CD4-positive, alpha-beta memory T cell (primary cell): ENCODE measurements at regions of chr11 and their contacts with region 1.

Region 1: GRCh38 chr11:447923-448731 is 2.0 kb upstream of the PTDSS2 start:
- DNase-seq: peak; percentile 90 to 94 (median 91)
- H3K4me3 ChIP-seq: peak overlapping the region; percentile 73 to 76
- H3K4me3 Mint-ChIP-seq: peak overlapping the region; percentile 88 to 93 (median 90)
- H3K27ac ChIP-seq: peak overlapping the region; percentile 85
- H3K27ac Mint-ChIP-seq: peak overlapping the region; percentile 93 to 98 (median 97)
- H3K4me1 ChIP-seq: peaks cover 32% of the 10 kb centered on the region
- H3K4me1 Mint-ChIP-seq: peaks cover 13 to 32% (median 22%) of the 10 kb centered on the region in 4 donors
- H3K27me3 ChIP-seq: no peaks in the 10 kb centered on the region
- H3K27me3 Mint-ChIP-seq: no peaks in the 10 kb centered on the region

Region 2: GRCh38 chr11:250740-251299 is 197.3 kb before region 1 on chr11:
- CTCF ChIA-PET with region 1: interaction called, 26 read pairs
- POLR2A ChIA-PET with region 1: interaction called, 9 read pairs
- intact Hi-C with region 1: loop called (anchors 2 kb)
- DNase-seq: peak; percentile 75 to 84 (median 81)
- H3K4me3 ChIP-seq: no peak overlapping the region
- H3K4me3 Mint-ChIP-seq: no peak overlapping the region
- H3K27ac ChIP-seq: peak overlapping the region; percentile 8
- H3K27ac Mint-ChIP-seq: peak overlapping the region; percentile 71 to 91 (median 81)
- H3K4me1 ChIP-seq: peaks cover 5% of the 10 kb centered on the region
- H3K4me1 Mint-ChIP-seq: peaks cover 6 to 9% (median 7%) of the 10 kb centered on the region in 4 donors
- H3K27me3 ChIP-seq: no peaks in the 10 kb centered on the region
- H3K27me3 Mint-ChIP-seq: no peaks in the 10 kb centered on the region

Region 3: GRCh38 chr11:304915-305843 is 142.9 kb before region 1 on chr11:
- CTCF ChIA-PET with region 1: interaction called, 42 read pairs
- POLR2A ChIA-PET with region 1: interaction called, 10 read pairs
- intact Hi-C with region 1: loop called (anchors 1 kb)
- DNase-seq: peak; percentile 64 to 75 (median 67)
- H3K4me3 ChIP-seq: no peak overlapping the region
- H3K4me3 Mint-ChIP-seq: peak overlapping the region in 5 of 8 donors; percentile 36 to 76 (median 52)
- H3K27ac ChIP-seq: peak overlapping the region; percentile 6
- H3K27ac Mint-ChIP-seq: peak overlapping the region; percentile 1 to 89 (median 78)
- H3K4me1 ChIP-seq: peaks cover 42% of the 10 kb centered on the region
- H3K4me1 Mint-ChIP-seq: peaks cover 20 to 58% (median 34%) of the 10 kb centered on the region in 4 donors
- H3K27me3 ChIP-seq: no peaks in the 10 kb centered on the region
- H3K27me3 Mint-ChIP-seq: peaks cover 0 to 3% of the 10 kb centered on the region in 2 donors

Region 4: GRCh38 chr11:363948-364761 is 84.0 kb before region 1 on chr11:
- CTCF ChIA-PET with region 1: interaction called, 24 read pairs
- POLR2A ChIA-PET with region 1: interaction called, 4 read pairs
- intact Hi-C with region 1: no loop called
- DNase-seq: peak; percentile 61 to 76 (median 72)
- H3K4me3 ChIP-seq: no peak overlapping the region
- H3K4me3 Mint-ChIP-seq: peak overlapping the region in 2 of 8 donors; percentile 12 to 51
- H3K27ac ChIP-seq: no peak overlapping the region
- H3K27ac Mint-ChIP-seq: peak overlapping the region in 2 of 7 donors; percentile 7 to 63
- H3K4me1 ChIP-seq: peaks cover 17% of the 10 kb centered on the region
- H3K4me1 Mint-ChIP-seq: peaks cover 7 to 22% (median 19%) of the 10 kb centered on the region in 4 donors
- H3K27me3 ChIP-seq: peaks cover 22% of the 10 kb centered on the region
- H3K27me3 Mint-ChIP-seq: peaks cover 18 to 20% of the 10 kb centered on the region in 2 donors

Region 5: DNA sequence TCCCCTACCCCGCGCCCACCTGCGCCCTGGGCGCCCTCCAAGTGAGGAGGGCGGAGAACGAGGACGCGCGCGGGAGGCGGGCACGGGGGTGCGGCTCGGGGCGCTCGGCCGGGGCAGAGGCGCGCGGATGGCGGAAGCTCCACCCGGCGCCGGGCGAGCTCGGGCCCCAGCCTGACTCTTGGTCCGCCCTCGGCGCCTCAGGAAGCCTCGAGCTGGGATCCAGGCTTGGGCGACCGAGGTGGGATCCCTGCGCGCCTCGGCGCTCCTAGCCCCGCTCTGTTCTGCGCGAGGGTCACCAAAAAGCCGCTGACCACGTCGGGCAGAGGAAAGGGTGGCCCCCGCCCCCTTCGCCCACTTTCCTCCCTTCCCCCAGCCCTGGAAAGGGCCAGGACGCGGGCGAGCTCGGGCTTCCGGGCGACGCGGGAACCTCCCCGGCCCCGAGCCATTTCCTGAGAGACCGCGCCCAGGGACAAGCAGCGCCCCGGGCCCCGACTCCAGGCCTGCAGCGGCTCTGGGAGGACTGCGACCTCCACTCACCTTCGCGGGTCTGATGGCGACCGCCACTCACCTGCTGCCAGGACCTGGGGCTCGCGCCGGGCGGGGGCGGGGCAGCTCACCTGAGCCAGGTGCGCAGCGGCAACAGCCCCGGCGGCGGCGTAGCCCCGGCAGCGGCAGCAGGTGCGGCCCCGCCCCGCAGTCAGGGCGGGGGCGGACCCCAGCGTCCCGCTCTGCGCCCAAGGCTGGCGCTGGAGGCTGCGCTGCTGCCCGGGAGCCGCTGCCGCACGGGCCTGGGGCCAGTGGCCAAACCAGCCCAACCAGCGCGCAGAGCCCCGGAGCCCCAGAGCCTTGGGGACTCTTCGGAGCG is 31.1 kb before region 1 on chr11:
- CTCF ChIA-PET with region 1: interaction called, 103 read pairs
- POLR2A ChIA-PET with region 1: interaction called, 539 read pairs
- intact Hi-C with region 1: loop called (anchors 1 kb)
- DNase-seq: peak in 4 of 5 donors; percentile 38 to 54 (median 45)
- H3K4me3 ChIP-seq: peak overlapping the region; percentile 17 to 73
- H3K4me3 Mint-ChIP-seq: peak overlapping the region; percentile 26 to 100 (median 96)
- H3K27ac ChIP-seq: peak overlapping the region; percentile 61
- H3K27ac Mint-ChIP-seq: peak overlapping the region in 4 of 7 donors; percentile 70 to 92 (median 83)
- H3K4me1 ChIP-seq: peaks cover 31% of the 10 kb centered on the region
- H3K4me1 Mint-ChIP-seq: peaks cover 4 to 42% (median 17%) of the 10 kb centered on the region in 4 donors
- H3K27me3 ChIP-seq: no peaks in the 10 kb centered on the region
- H3K27me3 Mint-ChIP-seq: no peaks in the 10 kb centered on the region

Region 6: GRCh38 chr11:535519-536454 is 87.7 kb after region 1 on chr11 and contains the start of gene HRAS:
- CTCF ChIA-PET with region 1: interaction called, 3 read pairs
- POLR2A ChIA-PET with region 1: interaction called, 10 read pairs
- intact Hi-C with region 1: no loop called
- DNase-seq: peak; percentile 93 to 98 (median 96)
- H3K4me3 ChIP-seq: peak within 1 kb of the TSS; percentile 29 to 69
- H3K4me3 Mint-ChIP-seq: peak within 1 kb of the TSS; percentile 90 to 98 (median 96)
- H3K27ac ChIP-seq: peak within 1 kb of the TSS; percentile 65
- H3K27ac Mint-ChIP-seq: peak within 1 kb of the TSS; percentile 92 to 98 (median 97)
- H3K4me1 ChIP-seq: peaks cover 40% of the 10 kb centered on the region
- H3K4me1 Mint-ChIP-seq: peaks cover 4 to 34% (median 16%) of the 10 kb centered on the region in 4 donors
- H3K27me3 ChIP-seq: no peaks in the 10 kb centered on the region
- H3K27me3 Mint-ChIP-seq: no peaks in the 10 kb centered on the region
- total RNA-seq, gene HRAS: 36.7 to 42.5 TPM

Region 7: GRCh38 chr11:1401656-1402221 is 953.6 kb after region 1 on chr11:
- CTCF ChIA-PET with region 1: no interaction called
- POLR2A ChIA-PET with region 1: no interaction called
- intact Hi-C with region 1: no loop called
- DNase-seq: peak; percentile 21 to 43 (median 33)
- H3K4me3 ChIP-seq: no peak overlapping the region
- H3K4me3 Mint-ChIP-seq: no peak overlapping the region
- H3K27ac ChIP-seq: no peak overlapping the region
- H3K27ac Mint-ChIP-seq: no peak overlapping the region
- H3K4me1 ChIP-seq: no peaks in the 10 kb centered on the region
- H3K4me1 Mint-ChIP-seq: no peaks in the 10 kb centered on the region
- H3K27me3 ChIP-seq: no peaks in the 10 kb centered on the region
- H3K27me3 Mint-ChIP-seq: peaks cover 0 to 2% of the 10 kb centered on the region in 2 donors